ENCODE measurements at regions of chr15 and their contacts with region 1.

Region 1: DNA sequence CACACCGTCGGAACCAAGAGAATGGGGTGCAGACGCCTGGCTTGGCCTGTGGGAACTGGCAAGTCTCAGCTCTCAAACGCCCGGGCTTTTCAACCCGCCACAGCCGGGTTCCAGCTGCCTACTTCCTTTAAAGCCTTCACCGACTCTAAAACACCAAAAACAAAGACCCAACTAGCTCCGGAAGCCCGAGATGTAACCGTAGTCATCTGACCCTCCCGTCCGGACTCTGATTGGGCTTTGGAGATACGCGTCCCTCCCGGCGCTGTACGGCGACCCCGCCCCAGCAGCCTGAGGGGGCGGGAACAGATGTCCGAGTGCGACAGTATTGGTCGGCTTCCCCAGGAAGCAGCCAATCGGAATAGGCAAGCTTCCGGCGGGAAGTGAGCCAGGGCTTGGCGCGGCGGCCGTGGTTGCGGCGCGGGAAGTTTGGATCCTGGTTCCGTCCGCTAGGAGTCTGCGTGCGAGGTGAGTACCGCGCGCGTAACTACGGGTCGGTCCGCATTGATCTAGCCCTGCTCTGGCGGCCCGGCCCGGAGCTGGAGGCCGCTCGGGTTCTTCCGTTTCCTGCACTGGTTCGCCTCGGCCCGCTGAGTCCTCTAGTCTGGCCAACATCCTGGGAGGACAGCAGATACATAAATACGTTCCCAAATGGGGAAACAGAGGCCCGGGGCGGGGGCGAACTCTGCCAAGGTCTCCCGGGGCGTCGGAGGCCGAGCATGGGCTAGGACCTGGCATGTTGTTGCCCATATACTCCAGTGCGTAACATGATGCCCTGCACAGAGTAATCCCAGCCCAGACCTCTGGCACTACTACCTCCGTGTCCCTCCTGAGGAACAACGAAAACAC is at the start of gene BLM:
- DNase-seq: peak; percentile 98
- ATAC-seq: peak; percentile 100
- H3K4me3 ChIP-seq: peak within 1 kb of the TSS; percentile 86 to 98 (median 97)
- H3K4me3 Mint-ChIP-seq: peak within 1 kb of the TSS; percentile 94
- H3K27ac ChIP-seq: peak within 1 kb of the TSS; percentile 81 to 89
- H3K27ac Mint-ChIP-seq: peak within 1 kb of the TSS; percentile 94
- H3K4me1 ChIP-seq: peaks cover 15 to 16% of the 10 kb centered on the region in 2 donors
- H3K4me1 Mint-ChIP-seq: peaks cover 28% of the 10 kb centered on the region
- H3K27me3 ChIP-seq: no peaks in the 10 kb centered on the region
- H3K27me3 Mint-ChIP-seq: no peaks in the 10 kb centered on the region
- CTCF ChIP-seq: peak; percentile 30
- total RNA-seq, gene BLM: 17.4 and 17.8 TPM in 2 replicates

Region 2: GRCh38 chr15:90352109-90352893 is 364.9 kb before region 1 on chr15 and contains the start of gene ZNF774:
- CTCF ChIA-PET with region 1: no interaction called
- POLR2A ChIA-PET with region 1: no interaction called
- intact Hi-C with region 1: loop called (anchors 1 kb)
- DNase-seq: peak; percentile 97
- ATAC-seq: peak; percentile 99
- H3K4me3 ChIP-seq: peak within 1 kb of the TSS; percentile 53 to 86 (median 81)
- H3K4me3 Mint-ChIP-seq: peak within 1 kb of the TSS; percentile 90
- H3K27ac ChIP-seq: peak within 1 kb of the TSS in 1 of 2 donors; percentile 60
- H3K27ac Mint-ChIP-seq: peak within 1 kb of the TSS; percentile 71
- H3K4me1 ChIP-seq: peaks cover 3 to 10% of the 10 kb centered on the region in 2 donors
- H3K4me1 Mint-ChIP-seq: peaks cover 7% of the 10 kb centered on the region
- H3K27me3 ChIP-seq: no peaks in the 10 kb centered on the region
- H3K27me3 Mint-ChIP-seq: no peaks in the 10 kb centered on the region
- CTCF ChIP-seq: no peak
- total RNA-seq, gene ZNF774: 0.54 and 1.4 TPM in 2 replicates

Region 3: DNA sequence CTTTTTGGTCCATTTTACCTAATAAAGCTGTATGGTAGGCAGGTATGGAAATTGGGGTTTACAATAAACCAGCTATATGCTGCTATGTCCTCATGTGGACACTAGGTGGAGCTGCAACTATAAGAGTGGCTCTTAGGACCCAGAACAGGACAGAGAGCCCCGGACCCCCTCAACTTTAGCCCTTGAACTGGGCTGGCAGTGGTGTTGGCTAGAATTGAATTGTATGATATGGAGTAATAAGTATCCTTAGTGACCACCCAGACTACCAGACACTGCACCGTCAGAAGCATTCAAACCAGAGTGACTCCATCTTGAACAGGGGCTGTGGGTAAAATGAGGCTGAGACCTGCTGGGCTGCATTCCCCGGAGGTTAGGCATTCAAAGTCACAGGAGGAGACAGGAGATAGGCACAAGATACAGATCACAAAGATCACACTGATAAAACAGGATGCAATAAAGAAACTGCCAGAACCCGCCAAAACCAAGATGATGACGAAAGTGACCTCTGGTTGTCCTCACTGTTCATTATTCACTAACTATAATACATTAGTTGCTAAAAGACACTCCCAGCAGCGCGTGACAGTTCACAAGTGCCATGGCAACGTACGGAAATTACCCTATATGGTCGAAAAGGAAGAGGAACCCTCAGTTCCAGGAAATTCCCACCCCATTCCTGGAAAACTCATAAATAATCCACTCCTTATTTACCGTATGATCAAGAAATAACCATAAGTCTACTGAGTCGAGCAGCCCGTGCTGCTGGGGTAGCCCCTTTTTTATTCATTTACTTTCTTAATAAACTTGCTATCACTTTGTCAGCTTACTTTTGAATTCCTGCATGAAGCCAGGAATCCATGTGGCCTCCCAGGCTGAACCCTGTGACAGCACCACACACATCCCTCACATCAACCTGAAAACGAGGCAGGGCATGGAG is 68.8 kb before region 1 on chr15:
- CTCF ChIA-PET with region 1: interaction called, 15 read pairs
- POLR2A ChIA-PET with region 1: no interaction called
- intact Hi-C with region 1: no loop called
- DNase-seq: peak; percentile 81
- ATAC-seq: peak; percentile 92
- H3K4me3 ChIP-seq: no peak overlapping the region
- H3K4me3 Mint-ChIP-seq: peak overlapping the region; percentile 57
- H3K27ac ChIP-seq: no peak overlapping the region
- H3K27ac Mint-ChIP-seq: peak overlapping the region; percentile 34
- H3K4me1 ChIP-seq: peaks cover 7 to 8% of the 10 kb centered on the region in 2 donors
- H3K4me1 Mint-ChIP-seq: peaks cover 9% of the 10 kb centered on the region
- H3K27me3 ChIP-seq: peaks cover 0 to 14% (median 5%) of the 10 kb centered on the region in 4 experiments
- H3K27me3 Mint-ChIP-seq: peaks cover 8% of the 10 kb centered on the region
- CTCF ChIP-seq: peak; percentile 94

Region 4: GRCh38 chr15:90839187-90840071 is 122.2 kb after region 1 on chr15:
- CTCF ChIA-PET with region 1: interaction called, 3 read pairs
- POLR2A ChIA-PET with region 1: no interaction called
- intact Hi-C with region 1: loop called (anchors 1 kb)
- DNase-seq: peak; percentile 74
- ATAC-seq: peak; percentile 54
- H3K4me3 ChIP-seq: peak overlapping the region in 3 of 5 experiments; percentile 52 to 74 (median 63)
- H3K4me3 Mint-ChIP-seq: peak overlapping the region; percentile 66
- H3K27ac ChIP-seq: peak overlapping the region in 1 of 2 donors; percentile 67
- H3K27ac Mint-ChIP-seq: peak overlapping the region; percentile 61
- H3K4me1 ChIP-seq: peaks cover 33 to 46% of the 10 kb centered on the region in 2 donors
- H3K4me1 Mint-ChIP-seq: peaks cover 38% of the 10 kb centered on the region
- H3K27me3 ChIP-seq: no peaks in the 10 kb centered on the region
- H3K27me3 Mint-ChIP-seq: no peaks in the 10 kb centered on the region
- CTCF ChIP-seq: no peak